Activated CD4-positive, alpha-beta memory T cell treated with anti-CD3 and anti-CD28 coated beads for 36 hours (primary cell): ENCODE measurements at regions of chr1 and their contacts with region 1.

Region 1: GRCh38 chr1:167936068-167936929 is at the start of gene DCAF6:
- DNase-seq: peak; percentile 98
- H3K4me3 Mint-ChIP-seq: peak within 1 kb of the TSS; percentile 91
- H3K27ac Mint-ChIP-seq: peak within 1 kb of the TSS; percentile 100
- H3K4me1 Mint-ChIP-seq: peaks cover 35% of the 10 kb centered on the region
- H3K27me3 Mint-ChIP-seq: no peaks in the 10 kb centered on the region
- total RNA-seq, gene DCAF6: 21.2 to 25.0 TPM

Region 2: GRCh38 chr1:167627865-167628641 is 308.2 kb before region 1 on chr1:
- CTCF ChIA-PET with region 1: no interaction called
- POLR2A ChIA-PET with region 1: interaction called, 6 read pairs
- intact Hi-C with region 1: loop called (anchors 5 kb)
- DNase-seq: peak; percentile 90
- H3K4me3 Mint-ChIP-seq: peak overlapping the region; percentile 92
- H3K27ac Mint-ChIP-seq: peak overlapping the region; percentile 99
- H3K4me1 Mint-ChIP-seq: peaks cover 46% of the 10 kb centered on the region
- H3K27me3 Mint-ChIP-seq: no peaks in the 10 kb centered on the region

Region 3: GRCh38 chr1:167803358-167804207 is 132.7 kb before region 1 on chr1:
- CTCF ChIA-PET with region 1: no interaction called
- POLR2A ChIA-PET with region 1: interaction called, 3 read pairs
- intact Hi-C with region 1: loop called (anchors 1 kb)
- DNase-seq: peak; percentile 95
- H3K4me3 Mint-ChIP-seq: peak overlapping the region; percentile 57
- H3K27ac Mint-ChIP-seq: peak overlapping the region; percentile 90
- H3K4me1 Mint-ChIP-seq: peaks cover 26% of the 10 kb centered on the region
- H3K27me3 Mint-ChIP-seq: no peaks in the 10 kb centered on the region

Region 4: GRCh38 chr1:167871331-167871730 is 65.0 kb before region 1 on chr1:
- CTCF ChIA-PET with region 1: no interaction called
- POLR2A ChIA-PET with region 1: no interaction called
- intact Hi-C with region 1: no loop called
- DNase-seq: no peak
- H3K4me3 Mint-ChIP-seq: no peak overlapping the region
- H3K27ac Mint-ChIP-seq: no peak overlapping the region
- H3K4me1 Mint-ChIP-seq: no peaks in the 10 kb centered on the region
- H3K27me3 Mint-ChIP-seq: no peaks in the 10 kb centered on the region

Region 5: GRCh38 chr1:167881786-167882185 is 54.5 kb before region 1 on chr1:
- CTCF ChIA-PET with region 1: no interaction called
- POLR2A ChIA-PET with region 1: no interaction called
- intact Hi-C with region 1: no loop called
- DNase-seq: no peak
- H3K4me3 Mint-ChIP-seq: no peak overlapping the region
- H3K27ac Mint-ChIP-seq: no peak overlapping the region
- H3K4me1 Mint-ChIP-seq: no peaks in the 10 kb centered on the region
- H3K27me3 Mint-ChIP-seq: peaks cover 6% of the 10 kb centered on the region

Region 6: DNA sequence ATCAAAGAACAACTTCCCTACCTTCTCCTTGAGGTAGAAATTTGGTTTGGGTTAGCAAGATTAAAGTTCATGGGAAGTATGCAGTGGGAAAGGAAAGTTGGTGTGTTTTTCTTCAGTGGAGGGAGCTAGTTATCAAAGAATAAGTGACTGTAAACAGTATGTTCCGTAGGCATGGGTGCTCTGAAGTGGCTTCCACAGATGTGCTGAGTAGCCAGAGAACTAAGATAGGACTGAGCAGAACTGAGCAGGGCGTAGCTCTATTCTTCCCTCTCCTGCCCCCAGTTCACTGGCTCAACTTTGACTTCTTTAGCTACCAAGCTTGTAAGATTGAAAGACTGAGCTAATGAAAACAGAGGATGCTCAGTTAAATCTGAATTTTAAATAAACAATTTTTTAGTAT is 25.8 kb before region 1 on chr1:
- CTCF ChIA-PET with region 1: no interaction called
- POLR2A ChIA-PET with region 1: no interaction called
- intact Hi-C with region 1: no loop called
- DNase-seq: no peak
- H3K4me3 Mint-ChIP-seq: no peak overlapping the region
- H3K27ac Mint-ChIP-seq: no peak overlapping the region
- H3K4me1 Mint-ChIP-seq: no peaks in the 10 kb centered on the region
- H3K27me3 Mint-ChIP-seq: no peaks in the 10 kb centered on the region

Region 7: GRCh38 chr1:168082008-168082876 is 145.9 kb after region 1 on chr1:
- CTCF ChIA-PET with region 1: interaction called, 27 read pairs
- POLR2A ChIA-PET with region 1: no interaction called
- intact Hi-C with region 1: loop called (anchors 1 kb)
- DNase-seq: peak; percentile 82
- H3K4me3 Mint-ChIP-seq: no peak overlapping the region
- H3K27ac Mint-ChIP-seq: no peak overlapping the region
- H3K4me1 Mint-ChIP-seq: no peaks in the 10 kb centered on the region
- H3K27me3 Mint-ChIP-seq: no peaks in the 10 kb centered on the region

Region 8: GRCh38 chr1:168178638-168179437 is 242.5 kb after region 1 on chr1 and contains the start of gene TIPRL:
- CTCF ChIA-PET with region 1: no interaction called
- POLR2A ChIA-PET with region 1: no interaction called
- intact Hi-C with region 1: loop called (anchors 1 kb)
- DNase-seq: peak; percentile 96
- H3K4me3 Mint-ChIP-seq: no peak within 1 kb of the TSS
- H3K27ac Mint-ChIP-seq: no peak within 1 kb of the TSS
- H3K4me1 Mint-ChIP-seq: peaks cover 10% of the 10 kb centered on the region
- H3K27me3 Mint-ChIP-seq: no peaks in the 10 kb centered on the region
- total RNA-seq, gene TIPRL: 51.1 to 54.2 TPM

Region 9: DNA sequence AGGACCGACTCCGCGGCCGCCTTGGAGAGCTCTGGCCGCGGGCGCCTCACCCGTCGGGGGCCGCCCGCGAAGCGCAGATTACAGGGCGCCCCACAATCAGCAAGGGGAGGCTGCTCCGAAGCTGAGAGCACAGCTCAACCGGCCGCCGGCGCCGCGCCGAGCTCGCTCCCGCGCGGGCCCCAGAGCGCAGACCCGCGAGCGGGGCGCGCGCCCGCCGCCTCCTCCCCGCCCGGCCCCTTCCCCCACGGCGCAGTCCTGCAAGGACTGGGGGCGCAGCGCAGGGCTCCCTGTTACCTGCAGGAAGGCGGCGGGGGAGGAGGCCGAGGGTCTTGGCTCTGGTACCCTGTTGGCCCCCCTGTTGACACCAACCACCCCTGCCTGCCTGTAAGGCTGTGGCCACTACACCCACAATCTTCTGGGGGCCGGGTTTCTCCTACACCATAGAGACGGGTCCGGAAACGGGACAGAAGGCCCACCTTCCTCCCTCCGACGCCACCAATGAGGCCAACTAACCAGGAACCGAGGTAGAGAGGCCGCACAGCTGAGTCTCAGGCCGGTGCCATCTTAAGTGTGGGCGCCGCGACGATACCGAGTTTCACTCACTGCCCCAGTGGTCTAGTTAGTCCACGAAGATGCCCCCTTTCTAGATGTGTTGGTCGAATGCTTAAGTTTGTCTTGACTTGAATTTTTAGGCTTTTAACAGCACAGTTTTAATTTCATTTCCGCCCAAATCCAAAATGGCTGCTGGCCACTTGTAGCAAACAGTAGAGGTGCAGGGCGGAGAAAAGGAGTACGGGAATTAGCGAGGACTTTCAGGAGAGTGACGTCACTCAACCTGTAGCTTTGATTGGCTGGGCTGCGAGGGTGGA is 1957.4 kb after region 1 on chr1 and contains the start of gene SCYL3:
- CTCF ChIA-PET with region 1: no interaction called
- POLR2A ChIA-PET with region 1: no interaction called
- intact Hi-C with region 1: loop called (anchors 5 kb)
- DNase-seq: peak; percentile 92
- H3K4me3 Mint-ChIP-seq: peak within 1 kb of the TSS; percentile 82
- H3K27ac Mint-ChIP-seq: peak within 1 kb of the TSS; percentile 98
- H3K4me1 Mint-ChIP-seq: peaks cover 38% of the 10 kb centered on the region
- H3K27me3 Mint-ChIP-seq: no peaks in the 10 kb centered on the region
- total RNA-seq, gene SCYL3: 11.1 to 12.4 TPM